ENCODE measurements at regions of chr4 and their contacts with region 1.

Region 1: GRCh38 chr4:41661442-41662076 is 87.0 kb downstream of the PHOX2B start:
- DNase-seq: peak; percentile 48
- ATAC-seq: peak; percentile 91
- H3K4me3 ChIP-seq: no peak overlapping the region
- H3K27ac ChIP-seq: no peak overlapping the region
- H3K4me1 ChIP-seq: peaks cover 4% of the 10 kb centered on the region; the same call in 1 of the 2 replicates
- H3K27me3 ChIP-seq: peaks cover 4% of the 10 kb centered on the region
- CTCF ChIP-seq: peak; percentile 89
- POLR2A ChIP-seq: no peak
- RAD21 ChIP-seq: peak; percentile 78

Region 2: GRCh38 chr4:40908702-40909362 is 752.7 kb before region 1 on chr4:
- CTCF ChIA-PET with region 1: no interaction called
- POLR2A ChIA-PET with region 1: no interaction called
- dilution Hi-C with region 1: no loop called
- in situ Hi-C with region 1: loop called (anchors 25 kb)
- intact Hi-C with region 1: no loop called
- DNase-seq: peak; percentile 76
- ATAC-seq: peak; percentile 80
- H3K4me3 ChIP-seq: no peak overlapping the region
- H3K27ac ChIP-seq: no peak overlapping the region; the same call in 1 of the 2 replicates
- H3K4me1 ChIP-seq: peaks cover 12% of the 10 kb centered on the region
- H3K27me3 ChIP-seq: no peaks in the 10 kb centered on the region
- CTCF ChIP-seq: peak; percentile 89
- POLR2A ChIP-seq: no peak
- RAD21 ChIP-seq: peak; percentile 83